HepG2 (cell line): ENCODE measurements at regions of chr1 and their contacts with region 1.

Region 1: DNA sequence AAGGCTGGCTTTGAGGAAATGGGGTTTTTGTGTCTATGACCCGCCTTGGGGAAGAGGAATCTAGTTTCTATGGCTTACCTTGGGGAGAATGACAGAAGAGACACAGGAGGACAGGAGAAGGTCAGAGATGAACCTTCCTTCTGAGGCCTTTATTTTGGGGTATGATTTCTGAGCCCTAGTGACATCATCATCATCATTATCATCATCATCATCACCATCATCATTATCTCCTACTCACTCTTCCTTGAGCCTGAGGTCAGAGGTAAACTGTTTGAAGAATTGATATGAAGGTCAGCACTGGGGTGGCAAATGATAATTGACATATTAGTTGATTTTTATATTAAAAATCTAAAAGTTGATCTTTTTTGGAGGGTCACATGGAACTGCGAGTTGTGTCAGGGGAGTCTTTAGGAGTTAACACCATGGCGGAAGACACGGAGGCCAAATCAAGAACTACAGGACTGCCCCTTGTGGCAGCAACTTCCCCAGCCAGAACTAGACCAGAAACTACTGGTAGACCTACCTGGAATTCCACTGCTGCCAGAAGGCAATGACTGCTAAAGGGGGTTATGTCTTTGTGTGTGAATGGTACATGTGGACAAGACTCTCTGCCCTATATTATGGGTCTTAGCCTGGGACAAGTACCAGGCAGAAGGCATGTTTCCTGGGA is 49.8 kb upstream of the WLS start:
- DNase-seq: no peak
- ATAC-seq: peak; percentile 71
- H3K4me3 ChIP-seq: no peak overlapping the region
- H3K27ac ChIP-seq: no peak overlapping the region
- H3K4me1 ChIP-seq: no peaks in the 10 kb centered on the region
- H3K27me3 ChIP-seq: no peaks in the 10 kb centered on the region
- CTCF ChIP-seq: no peak
- EP300 ChIP-seq: no peak
- POLR2A ChIP-seq: no peak
- RAD21 ChIP-seq: no peak

Region 2: DNA sequence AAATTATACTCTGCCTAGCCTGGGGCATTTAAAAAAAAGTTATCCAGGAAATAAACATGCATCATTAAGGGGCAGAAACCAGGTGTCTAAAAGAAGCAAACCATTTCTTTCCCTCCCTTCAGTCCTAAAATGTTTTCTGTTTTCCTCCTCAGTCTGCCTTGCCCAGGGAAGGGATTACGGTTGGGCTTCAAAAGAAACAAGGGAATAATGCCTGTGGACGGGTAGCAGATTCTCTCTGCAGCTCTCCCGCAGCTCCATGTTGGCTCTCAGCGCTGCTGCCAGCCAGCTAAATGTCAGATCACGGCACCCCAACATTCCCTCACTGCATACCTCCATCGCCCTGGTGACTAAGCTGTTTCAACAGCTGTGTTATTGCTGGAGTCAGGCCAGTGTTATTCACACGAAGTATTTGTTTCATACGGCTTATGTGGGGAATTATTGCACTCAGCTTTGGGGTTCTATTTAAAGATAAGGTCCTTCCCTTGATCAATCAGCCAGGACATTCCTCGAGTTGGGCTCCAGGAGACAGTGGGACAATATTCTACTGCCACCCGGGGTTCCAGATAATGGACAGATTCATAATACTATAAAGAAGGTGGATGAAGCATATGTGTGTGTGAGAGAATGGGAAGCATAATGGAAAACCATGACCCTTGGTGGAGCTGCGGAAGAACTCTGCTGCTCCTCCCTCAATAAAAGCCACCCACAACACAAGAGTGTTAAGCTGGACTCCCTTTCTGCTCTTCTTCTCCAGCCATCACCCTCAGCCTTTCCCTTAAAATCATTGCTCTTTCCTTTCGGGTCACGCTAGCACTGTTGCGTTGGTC is 108.0 kb before region 1 on chr1:
- CTCF ChIA-PET with region 1: no interaction called
- POLR2A ChIA-PET with region 1: no interaction called
- in situ Hi-C with region 1: no loop called
- intact Hi-C with region 1: no loop called
- DNase-seq: no peak
- ATAC-seq: no peak
- H3K4me3 ChIP-seq: no peak overlapping the region
- H3K27ac ChIP-seq: no peak overlapping the region
- H3K4me1 ChIP-seq: no peaks in the 10 kb centered on the region
- H3K27me3 ChIP-seq: no peaks in the 10 kb centered on the region
- CTCF ChIP-seq: no peak
- EP300 ChIP-seq: no peak
- POLR2A ChIP-seq: no peak
- RAD21 ChIP-seq: no peak

Region 3: DNA sequence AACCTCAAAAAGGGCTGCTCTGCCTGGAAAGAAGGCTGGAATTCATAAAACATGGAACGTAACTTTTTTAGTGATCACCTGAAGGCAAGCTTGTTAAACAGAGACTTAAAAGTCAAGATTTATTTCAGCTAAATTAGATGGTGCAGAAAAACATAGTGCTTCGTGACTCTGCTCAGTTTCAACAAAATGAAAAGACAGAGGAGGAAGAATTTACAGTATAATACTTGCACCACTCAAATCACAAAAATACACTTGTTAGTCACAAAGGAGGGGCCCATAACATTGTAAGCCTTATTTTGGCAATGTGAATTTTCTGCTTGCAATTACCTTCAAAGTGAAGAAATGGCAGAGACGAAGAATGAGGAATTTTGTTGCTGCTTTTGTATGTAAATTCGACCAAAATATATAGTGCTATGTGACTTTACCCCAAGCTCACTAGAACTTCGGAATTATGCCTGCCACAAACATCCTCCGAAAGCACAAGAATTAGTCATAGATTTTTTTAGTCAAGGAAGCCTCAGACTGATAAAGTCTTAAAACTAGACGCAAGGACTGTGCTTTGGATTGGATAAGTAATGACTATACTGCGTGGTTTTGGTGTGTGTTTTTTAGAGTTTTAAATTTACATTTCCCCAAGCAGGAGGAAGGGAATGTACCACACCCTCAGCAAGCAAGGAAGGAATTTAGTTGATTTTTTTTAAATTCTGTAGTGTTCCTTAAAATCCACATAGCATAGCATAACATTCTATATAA is 60.3 kb before region 1 on chr1:
- CTCF ChIA-PET with region 1: no interaction called
- POLR2A ChIA-PET with region 1: no interaction called
- in situ Hi-C with region 1: loop called (anchors 10 kb)
- intact Hi-C with region 1: no loop called
- DNase-seq: no peak
- ATAC-seq: no peak
- H3K4me3 ChIP-seq: no peak overlapping the region
- H3K27ac ChIP-seq: no peak overlapping the region
- H3K4me1 ChIP-seq: no peaks in the 10 kb centered on the region
- H3K27me3 ChIP-seq: no peaks in the 10 kb centered on the region
- CTCF ChIP-seq: no peak
- EP300 ChIP-seq: no peak
- POLR2A ChIP-seq: no peak
- RAD21 ChIP-seq: no peak

Region 4: GRCh38 chr1:68429233-68429808 is 147.2 kb after region 1 on chr1:
- CTCF ChIA-PET with region 1: no interaction called
- POLR2A ChIA-PET with region 1: no interaction called
- in situ Hi-C with region 1: no loop called
- intact Hi-C with region 1: no loop called
- DNase-seq: no peak
- ATAC-seq: no peak
- H3K4me3 ChIP-seq: no peak overlapping the region
- H3K27ac ChIP-seq: no peak overlapping the region
- H3K4me1 ChIP-seq: no peaks in the 10 kb centered on the region
- H3K27me3 ChIP-seq: no peaks in the 10 kb centered on the region
- CTCF ChIP-seq: no peak
- EP300 ChIP-seq: no peak
- POLR2A ChIP-seq: no peak
- RAD21 ChIP-seq: no peak